Spleen (tissue), 13 donors: ENCODE measurements at regions of chr3 and their contacts with region 1.

Region 1: GRCh38 chr3:25021816-25022215 is 406.2 kb upstream of the RARB start:
- DNase-seq: no peak
- H3K4me3 ChIP-seq: no peak overlapping the region
- H3K27ac ChIP-seq: no peak overlapping the region
- H3K4me1 ChIP-seq: no peaks in the 10 kb centered on the region
- H3K27me3 ChIP-seq: no peaks in the 10 kb centered on the region
- CTCF ChIP-seq: peak in 3 of 11 experiments; percentile 18 to 40 (median 23)
- POLR2A ChIP-seq: no peak

Region 2: DNA sequence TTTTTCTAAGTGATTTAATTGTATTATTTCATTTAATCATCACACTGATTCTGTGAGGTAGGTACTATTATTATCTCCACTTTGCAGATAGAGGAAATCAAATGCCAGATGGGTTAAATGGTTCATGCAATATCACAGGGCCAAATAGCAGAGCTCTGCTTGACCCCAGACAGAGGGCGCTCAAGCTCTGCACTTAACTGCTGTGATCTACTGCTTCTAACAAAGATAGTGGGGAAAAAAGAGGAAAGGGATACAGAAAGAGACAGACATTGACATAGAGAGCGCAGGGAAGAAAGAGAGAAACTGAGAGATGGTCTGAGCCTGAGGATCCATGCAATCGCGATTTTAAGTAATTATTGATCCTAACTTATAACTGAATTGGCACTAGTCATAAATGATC is 248.0 kb before region 1 on chr3:
- intact Hi-C with region 1: loop called (anchors 10 kb)
- DNase-seq: no peak
- H3K4me3 ChIP-seq: no peak overlapping the region
- H3K27ac ChIP-seq: no peak overlapping the region
- H3K4me1 ChIP-seq: no peaks in the 10 kb centered on the region
- H3K27me3 ChIP-seq: no peaks in the 10 kb centered on the region
- CTCF ChIP-seq: peak in 10 of 11 experiments; percentile 21 to 72 (median 52)
- POLR2A ChIP-seq: no peak